ENCODE measurements at regions of chr20 and their contacts with region 1.

Region 1: GRCh38 chr20:31514159-31515071 is at the start of gene HM13:
- DNase-seq: peak; percentile 46
- H3K4me3 ChIP-seq: peak within 1 kb of the TSS; percentile 99
- CTCF ChIP-seq: peak; percentile 89

Region 2: GRCh38 chr20:31485450-31486339 is 28.7 kb before region 1 on chr20:
- CTCF ChIA-PET with region 1: interaction called, 11 read pairs
- POLR2A ChIA-PET with region 1: no interaction called
- DNase-seq: no peak
- H3K4me3 ChIP-seq: peak overlapping the region; percentile 30; the same call in 1 of the 2 replicates
- CTCF ChIP-seq: no peak

Region 3: DNA sequence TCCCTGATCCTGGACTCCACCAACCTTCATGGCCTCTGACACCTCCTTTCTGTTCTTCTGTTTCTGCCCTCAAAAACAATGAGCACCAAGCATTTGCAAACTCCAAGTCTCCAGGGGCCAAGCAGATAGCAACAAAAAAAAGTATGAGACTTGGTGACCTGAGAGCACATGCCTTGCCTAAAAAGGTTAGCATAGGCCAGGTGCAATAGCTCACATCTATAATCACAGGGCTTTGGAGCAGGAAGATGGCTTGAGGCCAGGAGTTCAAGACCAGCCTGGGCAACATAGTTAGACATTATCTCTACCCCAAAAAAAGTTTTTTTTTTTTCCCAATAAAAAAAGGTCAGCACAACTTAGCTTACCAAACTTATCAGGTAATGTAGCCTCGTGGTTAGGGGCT is 13.9 kb before region 1 on chr20:
- CTCF ChIA-PET with region 1: interaction called, 76 read pairs
- POLR2A ChIA-PET with region 1: interaction called, 4 read pairs
- DNase-seq: no peak
- H3K4me3 ChIP-seq: no peak overlapping the region
- CTCF ChIP-seq: no peak

Region 4: DNA sequence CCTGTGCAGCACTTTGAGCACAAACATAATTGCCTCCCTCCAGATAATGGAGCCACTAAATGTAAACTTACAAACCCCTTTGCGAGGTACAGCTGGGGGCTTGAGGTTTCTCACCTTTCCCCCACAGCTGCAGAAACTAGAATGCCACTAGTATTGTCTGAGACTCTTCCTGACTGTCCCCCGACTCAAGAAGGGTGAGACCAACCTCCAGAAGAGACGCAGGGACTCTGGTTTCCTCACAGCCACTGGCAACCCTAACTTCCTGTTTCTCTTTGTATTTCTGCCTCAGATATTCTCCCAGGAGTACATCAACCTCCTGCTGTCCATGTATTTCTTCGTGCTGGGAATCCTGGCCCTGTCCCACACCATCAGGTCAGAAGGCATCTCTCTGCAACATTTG is 23.5 kb after region 1 on chr20:
- CTCF ChIA-PET with region 1: interaction called, 11 read pairs
- POLR2A ChIA-PET with region 1: interaction called, 5 read pairs
- DNase-seq: no peak
- H3K4me3 ChIP-seq: no peak overlapping the region
- CTCF ChIP-seq: no peak

Region 5: DNA sequence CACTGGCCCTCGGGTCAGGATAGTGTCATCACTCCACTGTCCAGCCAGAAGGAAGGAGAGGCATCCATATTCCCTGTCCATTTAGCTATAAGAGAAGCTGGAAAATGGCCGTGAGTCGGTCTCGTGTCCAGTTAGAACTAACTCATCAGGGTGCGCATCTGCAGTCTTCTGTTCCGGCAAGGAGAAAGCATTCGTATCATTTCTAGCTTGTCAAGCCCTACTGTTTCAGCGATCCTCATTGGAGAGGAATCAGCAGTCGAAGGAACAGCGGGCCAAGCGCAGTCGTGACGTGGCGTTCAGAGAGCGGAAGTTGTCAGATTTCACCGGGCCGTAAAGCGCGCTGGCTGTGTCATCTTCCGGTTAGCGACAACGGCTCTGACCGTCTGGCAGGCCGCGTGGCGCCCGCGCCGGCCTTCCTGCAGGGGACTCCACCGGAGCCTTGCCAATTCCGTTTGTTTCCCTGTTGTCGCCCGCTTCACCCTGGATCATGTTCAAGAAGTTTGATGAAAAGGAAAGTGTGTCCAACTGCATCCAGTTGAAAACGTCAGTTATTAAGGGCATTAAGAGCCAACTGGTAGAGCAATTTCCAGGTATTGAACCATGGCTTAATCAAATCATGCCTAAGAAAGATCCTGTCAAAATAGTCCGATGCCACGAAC is 32.7 kb after region 1 on chr20:
- CTCF ChIA-PET with region 1: interaction called, 10 read pairs
- POLR2A ChIA-PET with region 1: interaction called, 5 read pairs
- DNase-seq: no peak
- H3K4me3 ChIP-seq: peak overlapping the region; percentile 59
- CTCF ChIP-seq: no peak

Region 6: DNA sequence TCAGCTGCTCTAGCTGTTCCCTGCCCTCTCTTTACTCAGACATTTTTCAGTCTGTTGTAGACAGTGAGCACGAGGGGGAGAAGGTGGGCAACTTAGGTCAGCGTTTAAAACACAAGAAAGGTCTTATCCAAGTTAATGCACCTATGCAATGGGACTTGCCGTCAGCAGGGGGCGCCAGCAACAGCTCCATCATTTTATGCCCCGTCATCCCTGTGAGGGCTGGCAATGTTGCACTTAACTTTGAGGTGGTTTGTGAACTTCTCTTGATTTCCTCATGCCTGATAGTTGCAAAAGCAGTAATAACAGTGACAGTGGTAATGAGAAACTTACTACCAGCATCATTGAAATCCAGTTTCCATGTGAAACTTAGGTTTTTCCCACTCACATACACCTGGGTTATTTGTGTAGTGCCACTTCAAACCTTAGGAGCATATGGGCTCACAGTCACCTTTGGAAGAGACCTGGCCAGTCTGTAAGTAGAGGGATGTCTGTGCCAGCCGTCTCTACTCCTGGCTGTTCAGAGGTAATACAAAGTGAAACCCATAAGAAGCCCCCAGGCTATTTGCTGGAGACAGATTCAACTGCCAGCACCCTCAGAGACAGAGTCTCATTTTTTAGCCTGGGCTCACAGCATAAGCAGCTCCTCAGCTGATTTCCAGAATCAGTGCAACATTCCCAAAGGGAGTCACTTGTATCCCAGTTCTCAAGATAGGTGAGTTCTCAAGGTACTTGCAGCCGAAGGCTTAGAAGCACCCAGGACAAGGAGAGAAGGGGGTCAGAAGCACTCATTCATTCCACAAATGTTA is 45.9 kb after region 1 on chr20:
- CTCF ChIA-PET with region 1: interaction called, 12 read pairs
- POLR2A ChIA-PET with region 1: no interaction called
- DNase-seq: no peak
- H3K4me3 ChIP-seq: no peak overlapping the region
- CTCF ChIP-seq: peak; percentile 89

Measured in AG04449 (cell line).